ENCODE measurements at regions of chr11 and their contacts with region 1.

Region 1: DNA sequence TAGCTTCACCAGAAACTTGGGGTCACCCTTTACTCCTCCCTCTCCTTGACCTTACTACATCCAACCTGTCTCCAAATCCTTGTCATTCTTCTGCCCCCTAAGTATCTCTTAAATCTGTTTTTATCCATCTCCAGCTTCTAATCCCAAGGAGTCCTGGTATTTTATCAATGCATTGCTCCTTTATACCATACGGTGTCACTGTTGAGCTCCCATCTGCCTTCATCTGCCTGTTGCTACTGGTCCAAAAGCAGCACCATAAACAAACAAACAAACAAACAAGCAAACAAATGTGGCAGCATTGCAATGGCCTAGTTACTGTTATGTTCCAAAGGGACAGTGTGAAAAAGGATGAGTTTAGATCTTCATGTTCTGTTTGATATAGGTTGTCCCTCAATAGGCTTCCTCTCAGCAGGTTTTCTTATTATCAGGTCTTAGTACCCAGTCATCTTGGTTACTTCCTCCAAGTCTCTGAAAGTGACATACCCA is 34.2 kb downstream of the DNHD1 start:
- DNase-seq: peak; percentile 24
- H3K4me3 Mint-ChIP-seq: no peak overlapping the region
- H3K27ac Mint-ChIP-seq: no peak overlapping the region
- H3K4me1 Mint-ChIP-seq: peaks cover 16% of the 10 kb centered on the region
- H3K27me3 Mint-ChIP-seq: no peaks in the 10 kb centered on the region

Region 2: GRCh38 chr11:5291207-5291838 is 1240.0 kb before region 1 on chr11:
- CTCF ChIA-PET with region 1: no interaction called
- intact Hi-C with region 1: no loop called
- DNase-seq: no peak
- H3K4me3 Mint-ChIP-seq: no peak overlapping the region
- H3K27ac Mint-ChIP-seq: no peak overlapping the region
- H3K4me1 Mint-ChIP-seq: no peaks in the 10 kb centered on the region
- H3K27me3 Mint-ChIP-seq: no peaks in the 10 kb centered on the region

Region 3: GRCh38 chr11:6200975-6201374 is 330.3 kb before region 1 on chr11:
- CTCF ChIA-PET with region 1: no interaction called
- intact Hi-C with region 1: no loop called
- DNase-seq: no peak
- H3K4me3 Mint-ChIP-seq: no peak overlapping the region
- H3K27ac Mint-ChIP-seq: no peak overlapping the region
- H3K4me1 Mint-ChIP-seq: peaks cover 16% of the 10 kb centered on the region
- H3K27me3 Mint-ChIP-seq: no peaks in the 10 kb centered on the region

Region 4: DNA sequence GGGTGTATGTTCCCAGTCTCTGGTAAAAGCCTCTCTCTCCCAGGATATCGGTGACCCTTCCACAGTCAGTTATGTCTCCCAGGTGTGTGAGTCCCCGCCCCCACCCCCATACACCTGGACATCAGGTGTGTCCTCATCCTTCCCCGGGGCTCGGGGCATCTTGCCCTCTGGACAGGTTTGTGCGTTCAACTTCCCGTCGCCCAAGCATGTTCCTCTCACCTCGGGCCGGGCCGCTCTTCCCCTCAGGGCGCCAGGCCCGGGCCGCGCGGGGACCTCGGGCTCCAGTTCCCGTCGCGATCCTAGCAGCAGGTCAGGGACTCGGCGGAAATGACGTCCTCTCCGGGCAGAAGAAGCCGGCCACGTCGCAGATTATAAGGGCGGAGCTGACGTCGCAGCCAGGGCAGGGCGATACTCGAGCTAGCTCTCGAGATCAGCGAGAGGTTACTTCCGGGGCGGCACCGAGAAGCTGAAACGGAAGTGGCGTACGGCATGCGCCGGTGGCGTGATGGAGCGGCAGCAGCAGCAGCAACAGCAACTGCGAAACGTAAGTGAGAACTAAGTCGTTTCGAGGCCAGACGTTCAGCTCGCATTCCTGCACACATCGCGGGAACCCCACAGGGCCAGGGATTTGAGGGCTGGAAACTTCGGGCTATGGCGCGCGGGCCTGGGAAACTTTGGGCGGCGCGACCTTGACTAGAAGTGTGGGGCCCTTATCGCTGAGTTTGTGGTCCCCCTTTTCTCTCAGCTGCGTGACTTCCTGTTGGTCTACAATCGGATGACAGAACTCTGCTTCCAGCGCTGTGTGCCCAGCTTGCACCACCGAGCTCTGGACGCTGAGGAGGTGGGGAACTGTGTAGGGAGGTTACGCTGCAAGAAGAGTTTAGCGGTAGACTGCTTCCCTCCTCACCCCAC is 50.0 kb before region 1 on chr11 and contains the starts of genes ARFIP2 and TIMM10B:
- CTCF ChIA-PET with region 1: interaction called, 7 read pairs
- intact Hi-C with region 1: loop called (anchors 1 kb)
- DNase-seq: peak; percentile 99
- H3K4me3 Mint-ChIP-seq: peak within 1 kb of the TSS; percentile 94
- H3K27ac Mint-ChIP-seq: peak within 1 kb of the TSS; percentile 96
- H3K4me1 Mint-ChIP-seq: peaks cover 38% of the 10 kb centered on the region
- H3K27me3 Mint-ChIP-seq: no peaks in the 10 kb centered on the region
- total RNA-seq, gene ARFIP2: 33.5 to 37.9 TPM
- total RNA-seq, gene TIMM10B: 35.1 to 41.7 TPM

Region 5: DNA sequence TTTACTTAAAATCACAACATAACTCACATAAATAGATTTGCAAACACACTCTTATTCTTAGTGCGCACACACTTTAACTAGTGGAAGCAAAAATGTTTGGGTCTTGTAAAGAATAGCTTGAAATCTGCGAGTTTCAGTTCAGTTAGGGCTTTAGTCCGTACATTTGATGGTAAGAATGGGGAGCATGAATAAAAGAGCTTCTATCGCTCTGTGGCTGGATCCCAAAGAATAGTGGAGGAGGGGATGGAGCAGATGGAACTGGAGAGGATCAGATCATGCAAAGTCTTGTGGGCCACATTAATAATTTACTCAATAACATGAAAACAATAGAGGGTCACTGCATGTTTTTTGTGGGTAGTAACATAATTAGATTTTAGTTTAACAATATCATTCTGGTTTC is 10.0 kb after region 1 on chr11:
- CTCF ChIA-PET with region 1: interaction called, 11 read pairs
- intact Hi-C with region 1: no loop called
- DNase-seq: no peak
- H3K4me3 Mint-ChIP-seq: no peak overlapping the region
- H3K27ac Mint-ChIP-seq: no peak overlapping the region
- H3K4me1 Mint-ChIP-seq: no peaks in the 10 kb centered on the region
- H3K27me3 Mint-ChIP-seq: no peaks in the 10 kb centered on the region

Region 6: DNA sequence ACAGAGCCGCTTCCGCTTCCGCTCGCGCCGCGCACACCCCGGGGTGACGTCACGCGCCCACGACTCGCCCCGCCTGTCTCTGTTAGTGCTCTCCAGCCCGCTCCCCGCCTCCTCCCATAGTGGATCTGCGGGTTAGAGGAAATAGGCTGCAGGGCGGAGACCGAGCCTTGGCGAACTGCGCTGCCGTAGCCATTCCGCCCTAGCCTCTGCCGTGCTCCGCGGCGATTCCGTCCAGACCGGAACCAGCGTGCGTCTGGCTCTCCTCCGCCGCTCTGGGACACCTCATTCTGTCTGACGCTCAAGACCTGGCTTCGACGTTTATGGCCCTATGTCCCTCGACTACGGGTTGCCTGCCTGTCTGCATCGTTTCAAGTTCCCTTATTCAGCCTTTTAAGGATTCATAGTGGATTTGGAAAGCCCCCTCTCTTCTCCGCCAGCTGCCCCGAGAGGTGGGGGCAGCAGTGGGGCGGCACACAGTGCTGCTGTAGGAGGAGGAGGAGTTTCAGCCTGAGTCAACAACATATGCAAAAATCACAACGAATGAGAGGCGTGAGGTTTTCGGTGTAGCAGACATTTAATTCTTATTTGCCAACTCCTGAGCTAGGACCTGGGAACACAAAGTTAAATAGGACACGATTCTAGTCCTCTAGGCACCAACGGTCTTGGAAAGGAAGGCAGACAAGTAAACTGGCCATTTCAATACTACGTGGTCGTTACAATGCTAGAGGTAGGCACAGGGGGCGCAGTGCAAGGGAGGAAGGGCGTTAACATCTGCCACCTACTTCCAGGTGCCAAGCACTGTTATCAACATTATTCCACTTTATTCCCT is 81.1 kb after region 1 on chr11 and contains the start of gene TAF10:
- CTCF ChIA-PET with region 1: no interaction called
- intact Hi-C with region 1: loop called (anchors 1 kb)
- DNase-seq: peak; percentile 97
- H3K4me3 Mint-ChIP-seq: peak within 1 kb of the TSS; percentile 87
- H3K27ac Mint-ChIP-seq: peak within 1 kb of the TSS; percentile 90
- H3K4me1 Mint-ChIP-seq: peaks cover 39% of the 10 kb centered on the region
- H3K27me3 Mint-ChIP-seq: no peaks in the 10 kb centered on the region
- total RNA-seq, gene TAF10: 151 to 156 TPM

Region 7: GRCh38 chr11:6667733-6668374 is 136.5 kb after region 1 on chr11:
- CTCF ChIA-PET with region 1: interaction called, 12 read pairs
- intact Hi-C with region 1: no loop called
- DNase-seq: peak; percentile 59
- H3K4me3 Mint-ChIP-seq: no peak overlapping the region
- H3K27ac Mint-ChIP-seq: peak overlapping the region; percentile 28
- H3K4me1 Mint-ChIP-seq: peaks cover 63% of the 10 kb centered on the region
- H3K27me3 Mint-ChIP-seq: no peaks in the 10 kb centered on the region

Region 8: DNA sequence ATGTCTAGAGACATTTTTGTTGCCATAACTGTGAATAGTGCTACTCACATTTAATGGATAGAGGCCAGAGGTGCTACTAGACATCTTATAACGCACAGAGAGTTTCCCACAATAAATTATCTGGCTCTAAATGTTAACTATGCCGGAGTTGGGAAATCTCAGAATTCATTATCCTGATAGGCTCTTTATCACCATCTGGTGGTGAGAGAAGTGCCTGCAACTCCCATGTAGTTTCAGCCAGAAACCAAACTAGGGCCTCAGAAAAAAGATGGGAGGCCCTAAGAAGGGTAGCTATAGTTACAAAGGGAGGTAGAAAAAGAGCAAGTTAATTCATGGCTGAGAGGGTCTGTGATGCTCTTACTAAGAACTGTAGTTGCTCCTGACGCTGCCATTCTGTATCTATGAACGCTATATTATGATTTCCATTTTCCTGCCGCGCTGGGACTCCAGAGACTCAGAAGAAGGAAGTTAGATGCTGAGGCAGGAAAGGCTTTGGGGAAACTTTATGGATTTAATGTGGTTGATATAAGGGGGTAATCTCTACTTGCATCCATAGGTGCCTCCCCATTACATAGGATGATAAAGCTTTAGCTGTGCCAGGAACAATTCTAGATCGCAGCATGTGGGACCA is 174.7 kb after region 1 on chr11:
- CTCF ChIA-PET with region 1: interaction called, 12 read pairs
- intact Hi-C with region 1: loop called (anchors 1 kb)
- DNase-seq: peak; percentile 66
- H3K4me3 Mint-ChIP-seq: no peak overlapping the region
- H3K27ac Mint-ChIP-seq: no peak overlapping the region
- H3K4me1 Mint-ChIP-seq: peaks cover 17% of the 10 kb centered on the region
- H3K27me3 Mint-ChIP-seq: no peaks in the 10 kb centered on the region

Region 9: DNA sequence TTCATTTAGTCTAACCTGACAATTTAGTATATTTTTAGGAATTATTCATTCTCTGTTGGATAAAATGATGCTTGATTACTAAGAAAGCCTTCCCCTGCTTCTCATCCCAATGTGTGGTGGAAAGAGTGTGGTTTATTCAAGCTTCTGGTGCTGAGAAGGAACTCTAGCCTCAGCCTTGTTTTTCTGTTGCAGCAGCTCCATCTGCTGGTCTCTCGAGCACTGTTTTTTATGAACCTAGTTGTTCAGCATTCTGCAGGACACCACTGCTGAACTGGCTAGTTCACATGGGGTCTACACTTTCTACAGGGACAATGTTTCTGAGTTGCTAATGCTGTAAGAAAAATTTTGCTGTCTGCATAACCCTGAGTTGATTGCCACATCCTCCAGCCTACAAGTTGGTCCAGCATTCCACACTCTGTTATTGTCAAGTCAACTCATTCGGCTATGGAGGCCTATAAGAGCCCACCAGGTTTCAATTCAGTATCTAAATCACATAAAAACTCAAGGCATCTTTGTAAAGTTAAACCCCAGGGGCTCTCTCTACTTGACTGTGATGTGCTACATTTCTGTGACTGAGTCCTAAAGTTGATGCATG is 226.2 kb after region 1 on chr11:
- CTCF ChIA-PET with region 1: interaction called, 15 read pairs
- intact Hi-C with region 1: loop called (anchors 1 kb)
- DNase-seq: peak; percentile 86
- H3K4me3 Mint-ChIP-seq: no peak overlapping the region
- H3K27ac Mint-ChIP-seq: no peak overlapping the region
- H3K4me1 Mint-ChIP-seq: peaks cover 10% of the 10 kb centered on the region
- H3K27me3 Mint-ChIP-seq: no peaks in the 10 kb centered on the region